Activated T-helper 2 cell treated with anti-CD3 and anti-CD28 coated beads, Interferon-gamma antibody, Interleukin-2, Interleukin-4, amounts not matched to agents 10 μg/mL and 5 μg/mL and 100 μg/mL, durations not matched to agents 14 hours and 24 hours and 36 hours (primary cell): ENCODE measurements at regions of chr1 and their contacts with region 1.

Region 1: GRCh38 chr1:230066466-230067404 is at the start of gene GALNT2:
- DNase-seq: peak; percentile 87
- H3K4me3 Mint-ChIP-seq: peak within 1 kb of the TSS; percentile 89
- H3K27ac Mint-ChIP-seq: peak within 1 kb of the TSS; percentile 85
- H3K4me1 Mint-ChIP-seq: peaks cover 32% of the 10 kb centered on the region
- H3K27me3 Mint-ChIP-seq: peaks cover 6% of the 10 kb centered on the region
- total RNA-seq, gene GALNT2: 58.9 and 59.3 TPM in 2 replicates

Region 2: DNA sequence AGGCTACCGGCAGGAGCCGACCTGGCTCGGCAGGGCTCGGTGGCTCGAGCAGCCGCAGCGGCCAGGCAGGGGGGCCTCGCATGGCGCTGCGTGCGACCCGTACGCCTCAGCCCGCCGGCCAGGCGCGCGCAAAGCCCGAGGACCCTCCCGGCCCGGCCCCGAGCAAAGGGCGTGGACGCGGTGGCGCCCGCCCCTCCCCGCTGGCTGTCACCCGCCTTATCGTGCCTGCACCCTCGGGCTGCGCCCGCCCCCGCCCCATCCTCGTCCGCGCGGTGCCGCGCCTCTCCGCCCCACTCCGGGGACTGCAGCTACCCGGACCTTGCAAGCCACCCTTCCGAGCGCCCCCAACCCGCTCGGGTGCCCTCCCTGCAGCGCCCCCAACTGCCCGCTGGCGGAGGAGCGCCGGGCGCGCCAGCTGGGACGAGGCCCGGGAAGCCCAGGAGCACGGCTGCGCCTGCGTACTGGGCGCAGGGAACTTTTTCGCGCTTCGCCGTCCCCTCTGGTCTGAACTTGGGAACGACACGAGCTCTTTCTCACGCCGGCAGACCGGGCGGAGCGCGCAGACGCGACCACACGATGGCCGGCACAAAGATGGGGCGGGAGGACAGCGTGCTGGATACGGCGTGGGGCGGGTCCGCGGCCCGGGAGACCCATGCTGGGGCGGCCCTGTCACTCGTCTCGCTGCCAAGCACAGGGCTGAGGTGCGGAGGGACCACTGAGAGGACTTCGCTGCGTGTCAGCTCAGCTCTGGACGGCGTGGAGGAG is 508.0 kb before region 1 on chr1 and contains the start of gene ABCB10:
- intact Hi-C with region 1: loop called (anchors 1 kb)
- DNase-seq: peak; percentile 82
- H3K4me3 Mint-ChIP-seq: peak within 1 kb of the TSS; percentile 87
- H3K27ac Mint-ChIP-seq: peak within 1 kb of the TSS; percentile 80
- H3K4me1 Mint-ChIP-seq: peaks cover 34% of the 10 kb centered on the region
- H3K27me3 Mint-ChIP-seq: no peaks in the 10 kb centered on the region
- total RNA-seq, gene ABCB10: 40.1 and 42.7 TPM in 2 replicates

Region 3: GRCh38 chr1:230084138-230084880 is 17.6 kb after region 1 on chr1:
- intact Hi-C with region 1: loop called (anchors 2 kb)
- DNase-seq: no peak
- H3K4me3 Mint-ChIP-seq: no peak overlapping the region
- H3K27ac Mint-ChIP-seq: peak overlapping the region; percentile 74
- H3K4me1 Mint-ChIP-seq: peaks cover 49% of the 10 kb centered on the region
- H3K27me3 Mint-ChIP-seq: no peaks in the 10 kb centered on the region

Region 4: GRCh38 chr1:230127105-230128054 is 60.6 kb after region 1 on chr1:
- intact Hi-C with region 1: loop called (anchors 2 kb)
- DNase-seq: peak; percentile 47
- H3K4me3 Mint-ChIP-seq: peak overlapping the region; percentile 53
- H3K27ac Mint-ChIP-seq: peak overlapping the region; percentile 70
- H3K4me1 Mint-ChIP-seq: peaks cover 62% of the 10 kb centered on the region
- H3K27me3 Mint-ChIP-seq: no peaks in the 10 kb centered on the region

Region 5: GRCh38 chr1:230240446-230241086 is 173.8 kb after region 1 on chr1:
- intact Hi-C with region 1: loop called (anchors 2 kb)
- DNase-seq: no peak
- H3K4me3 Mint-ChIP-seq: no peak overlapping the region
- H3K27ac Mint-ChIP-seq: peak overlapping the region; percentile 85
- H3K4me1 Mint-ChIP-seq: peaks cover 35% of the 10 kb centered on the region
- H3K27me3 Mint-ChIP-seq: no peaks in the 10 kb centered on the region

Region 6: DNA sequence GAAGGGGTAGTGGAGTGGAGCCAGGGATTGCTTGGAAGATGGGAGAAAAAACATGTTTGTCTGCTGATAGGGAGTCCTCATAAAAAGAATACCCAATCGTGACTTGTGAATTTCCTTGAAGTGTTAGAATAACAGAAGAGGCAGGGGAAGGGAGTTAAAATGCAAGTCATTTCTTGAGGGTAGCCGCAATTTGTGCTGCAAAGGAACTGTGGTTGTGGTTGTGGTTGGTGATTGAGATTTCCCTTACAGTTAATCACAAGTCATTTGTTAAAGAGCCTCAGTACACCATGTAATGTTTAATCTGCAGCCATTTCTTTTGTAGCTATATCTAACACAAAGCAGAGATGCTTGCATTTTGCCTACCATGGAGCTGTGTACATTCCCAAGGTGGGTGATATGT is 1393.9 kb after region 1 on chr1:
- intact Hi-C with region 1: loop called (anchors 5 kb)
- DNase-seq: peak; percentile 71
- H3K4me3 Mint-ChIP-seq: no peak overlapping the region
- H3K27ac Mint-ChIP-seq: no peak overlapping the region
- H3K4me1 Mint-ChIP-seq: peaks cover 35% of the 10 kb centered on the region
- H3K27me3 Mint-ChIP-seq: peaks cover 61% of the 10 kb centered on the region